Esophagus muscularis mucosa (tissue), 4 donors: ENCODE measurements at regions of chr15 and their contacts with region 1.

Region 1: DNA sequence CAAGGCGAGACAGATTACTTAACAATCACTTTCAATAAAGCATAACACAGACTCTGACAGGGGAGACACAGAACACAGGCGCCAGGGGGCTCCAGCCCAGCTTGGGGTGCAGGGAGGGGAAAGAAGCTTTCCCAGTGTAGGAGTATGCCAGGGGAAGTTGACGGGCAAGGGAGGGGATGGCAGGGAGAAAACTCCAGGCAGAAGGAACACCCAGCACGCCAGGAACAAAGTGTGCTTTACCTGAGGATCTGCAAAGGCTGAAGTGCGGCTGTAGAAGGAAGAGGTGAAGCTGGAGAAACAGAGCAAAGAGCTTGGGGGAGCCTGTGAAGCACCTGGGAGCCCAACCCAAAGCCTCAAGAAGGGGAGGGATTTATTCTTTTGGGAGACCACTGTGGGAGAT is 12.1 kb downstream of the RGMA start:
- DNase-seq: no peak
- H3K4me3 ChIP-seq: no peak overlapping the region
- H3K27ac ChIP-seq: peak overlapping the region; percentile 95 to 98 (median 97)
- H3K4me1 ChIP-seq: peaks cover 18 to 98% (median 87%) of the 10 kb centered on the region in 4 donors
- H3K27me3 ChIP-seq: peaks cover 0 to 15% (median 0%) of the 10 kb centered on the region in 4 donors
- CTCF ChIP-seq: no peak
- EP300 ChIP-seq: peak; percentile 69
- POLR2A ChIP-seq: no peak

Region 2: DNA sequence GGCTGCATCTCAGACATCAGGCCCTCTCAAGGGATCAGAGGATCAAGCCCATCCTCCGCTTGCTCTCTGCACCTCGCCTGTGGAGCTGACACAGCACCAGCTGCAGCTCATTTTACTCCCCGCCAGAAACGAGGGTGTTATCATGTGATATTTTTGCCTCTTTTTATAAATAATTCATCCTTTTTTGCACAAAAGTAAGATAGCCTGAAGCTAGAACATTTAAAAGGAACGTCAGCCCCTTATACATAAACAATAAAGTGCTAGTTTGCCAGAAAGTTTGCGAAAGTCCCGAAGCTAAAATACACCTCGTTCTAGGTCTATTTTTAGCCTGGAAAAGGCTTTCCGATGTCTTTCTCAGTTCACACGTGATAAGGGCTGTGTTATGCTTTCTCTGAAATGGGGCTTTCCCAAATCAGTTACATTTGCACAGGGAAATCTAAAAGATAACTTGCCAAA is 411.7 kb before region 1 on chr15:
- intact Hi-C with region 1: no loop called
- DNase-seq: peak; percentile 79
- H3K4me3 ChIP-seq: peak overlapping the region in 3 of 4 donors; percentile 3 to 11 (median 11)
- H3K27ac ChIP-seq: peak overlapping the region; percentile 80 to 93 (median 82)
- H3K4me1 ChIP-seq: peaks cover 32 to 48% (median 45%) of the 10 kb centered on the region in 4 donors
- H3K27me3 ChIP-seq: no peaks in the 10 kb centered on the region
- CTCF ChIP-seq: no peak
- EP300 ChIP-seq: peak; percentile 84
- POLR2A ChIP-seq: no peak

Region 3: GRCh38 chr15:92803847-92804609 is 272.8 kb before region 1 on chr15:
- intact Hi-C with region 1: loop called (anchors 5 kb)
- DNase-seq: peak; percentile 94
- H3K4me3 ChIP-seq: no peak overlapping the region
- H3K27ac ChIP-seq: peak overlapping the region; percentile 85 to 98 (median 96)
- H3K4me1 ChIP-seq: peaks cover 34 to 62% (median 59%) of the 10 kb centered on the region in 4 donors
- H3K27me3 ChIP-seq: no peaks in the 10 kb centered on the region
- CTCF ChIP-seq: peak in 1 of 3 experiments; percentile 19
- EP300 ChIP-seq: peak; percentile 90
- POLR2A ChIP-seq: no peak